ENCODE measurements at regions of chrX and their contacts with region 1.

Region 1: DNA sequence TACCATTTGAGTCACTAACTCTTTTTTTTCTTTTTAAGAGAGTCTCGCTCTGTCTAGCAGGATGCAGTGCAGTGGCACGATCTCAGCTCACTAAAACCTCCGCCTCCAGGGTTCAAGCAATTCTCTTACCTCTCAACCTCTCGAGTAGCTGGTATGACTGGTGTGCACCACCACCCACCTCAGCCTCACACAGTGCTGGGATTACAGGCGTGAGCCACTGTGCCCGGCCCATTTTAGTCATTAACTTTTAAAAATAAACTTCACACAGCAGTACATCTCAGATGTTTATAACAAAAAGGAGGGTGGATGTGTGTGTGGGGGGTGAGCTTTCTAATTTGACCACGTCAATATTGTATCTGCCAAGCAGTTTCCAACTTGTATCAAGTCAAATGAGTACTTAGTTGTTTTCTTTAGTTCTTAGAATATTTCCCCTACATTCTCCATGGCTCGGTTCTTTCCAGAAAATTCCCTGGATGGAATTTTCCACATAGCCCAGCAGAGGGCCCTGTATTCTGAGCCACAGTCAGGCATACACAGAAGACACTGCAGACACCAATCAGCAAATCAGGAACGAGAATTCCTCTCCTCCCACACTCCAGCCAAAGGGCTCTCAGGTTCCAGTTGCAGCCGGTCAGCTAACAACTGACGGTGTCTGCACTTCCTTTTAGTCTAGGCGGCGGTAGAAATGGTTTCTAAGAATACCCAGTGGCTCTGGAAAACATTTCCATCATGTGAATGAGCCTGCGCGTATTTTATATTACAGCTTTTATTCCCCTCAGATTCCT is 20.1 kb upstream of the ARAF start:
- DNase-seq: peak; percentile 77
- H3K4me3 ChIP-seq: no peak overlapping the region
- H3K27ac ChIP-seq: peak overlapping the region; percentile 64 to 79 (median 78)
- H3K4me1 ChIP-seq: peaks cover 0 to 11% (median 4%) of the 10 kb centered on the region in 4 donors
- H3K27me3 ChIP-seq: no peaks in the 10 kb centered on the region
- CTCF ChIP-seq: peak; percentile 48 to 69 (median 50)
- EP300 ChIP-seq: no peak
- POLR2A ChIP-seq: peak; percentile 32

Region 2: DNA sequence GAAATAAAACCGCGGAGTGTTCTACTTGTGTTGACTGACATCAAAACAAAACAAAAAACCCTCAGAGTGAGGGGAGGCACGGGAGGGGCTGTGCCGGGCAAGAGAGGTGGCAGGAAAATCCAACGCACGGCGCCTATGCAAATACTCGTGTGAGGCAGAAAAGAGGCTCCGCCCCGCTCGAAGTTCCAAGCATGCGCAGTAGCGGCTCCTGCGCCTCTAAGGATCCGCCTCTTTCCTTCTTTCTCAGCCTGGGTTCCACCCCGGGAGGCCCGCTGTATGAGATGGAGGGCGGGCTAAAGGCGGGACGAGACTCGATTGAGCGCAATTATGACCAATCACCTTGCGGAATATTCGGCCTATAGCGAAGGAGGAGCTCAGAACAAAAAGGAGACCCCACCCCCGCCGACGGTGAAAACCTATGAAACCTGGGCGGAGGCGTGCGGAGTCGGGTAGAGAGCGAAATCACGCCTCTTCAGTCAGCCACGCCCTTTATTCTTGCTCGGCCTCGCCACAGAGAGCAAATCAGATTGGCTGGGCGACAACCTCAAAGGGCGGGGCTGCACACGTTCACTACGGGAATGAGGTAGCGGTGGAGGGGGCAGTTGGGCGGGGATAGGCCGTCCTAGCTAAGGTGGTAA is 323.2 kb before region 1 on chrX:
- in situ Hi-C with region 1: loop called in 1 of 4 experiments (anchors 25 kb)
- intact Hi-C with region 1: no loop called
- DNase-seq: peak; percentile 99
- H3K4me3 ChIP-seq: peak overlapping the region; percentile 83 to 99 (median 94)
- H3K27ac ChIP-seq: peak overlapping the region; percentile 96 to 100 (median 99)
- H3K4me1 ChIP-seq: peaks cover 7 to 33% (median 20%) of the 10 kb centered on the region in 4 donors
- H3K27me3 ChIP-seq: no peaks in the 10 kb centered on the region
- CTCF ChIP-seq: no peak
- EP300 ChIP-seq: no peak
- POLR2A ChIP-seq: no peak

Region 3: DNA sequence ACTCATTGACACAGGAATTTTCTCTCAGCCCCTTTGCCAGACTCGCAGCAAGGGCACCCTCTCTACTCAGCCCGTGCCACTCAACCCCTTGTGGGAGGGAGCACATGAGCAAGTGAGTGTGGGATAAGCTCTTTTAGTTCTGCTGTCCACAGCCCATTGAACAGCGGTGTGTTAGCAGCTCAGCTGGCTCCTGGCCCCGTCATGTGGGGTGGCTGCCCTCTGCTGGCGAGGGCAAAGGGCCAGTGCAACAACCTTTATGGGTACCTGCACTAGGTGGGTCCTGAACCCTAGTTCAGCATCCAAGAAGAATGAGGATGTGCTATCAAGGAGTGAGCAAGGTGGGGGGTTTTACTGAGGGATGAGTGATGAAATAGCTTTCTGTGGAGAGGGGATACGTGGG is 210.7 kb after region 1 on chrX:
- in situ Hi-C with region 1: loop called in 1 of 4 experiments (anchors 25 kb)
- intact Hi-C with region 1: no loop called
- DNase-seq: peak; percentile 60
- H3K4me3 ChIP-seq: no peak overlapping the region
- H3K27ac ChIP-seq: no peak overlapping the region
- H3K4me1 ChIP-seq: no peaks in the 10 kb centered on the region
- H3K27me3 ChIP-seq: no peaks in the 10 kb centered on the region
- CTCF ChIP-seq: peak in 4 of 5 experiments; percentile 11 to 40 (median 22)
- EP300 ChIP-seq: no peak
- POLR2A ChIP-seq: no peak

Measured in transverse colon (tissue), 4 donors.